Upper lobe of right lung (tissue), 1 donor: ENCODE measurements at regions of chr17 and their contacts with region 1.

Region 1: DNA sequence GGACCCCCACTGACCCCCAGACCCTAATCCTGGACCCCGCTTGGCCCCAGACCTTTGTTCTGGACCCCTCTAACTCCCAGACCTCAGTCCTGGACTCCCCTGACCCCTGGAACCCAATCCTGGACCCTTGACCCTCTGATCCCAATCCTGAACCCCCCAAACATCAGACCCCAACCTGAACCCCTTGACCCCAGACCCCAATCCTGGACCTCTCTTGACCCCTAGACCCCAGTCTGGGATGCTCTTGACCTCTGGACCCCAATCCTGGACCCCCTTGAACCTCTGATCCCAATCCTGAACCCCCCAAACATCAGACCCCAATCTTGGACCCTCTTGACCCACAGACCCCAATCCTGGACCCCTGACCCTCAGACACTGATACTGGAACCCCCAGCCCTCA is 13.5 kb upstream of the P2RX1 start:
- DNase-seq: no peak
- ATAC-seq: no peak
- H3K4me3 ChIP-seq: no peak overlapping the region
- H3K27ac ChIP-seq: no peak overlapping the region
- H3K4me1 ChIP-seq: no peaks in the 10 kb centered on the region
- H3K27me3 ChIP-seq: no peaks in the 10 kb centered on the region
- CTCF ChIP-seq: no peak

Region 2: DNA sequence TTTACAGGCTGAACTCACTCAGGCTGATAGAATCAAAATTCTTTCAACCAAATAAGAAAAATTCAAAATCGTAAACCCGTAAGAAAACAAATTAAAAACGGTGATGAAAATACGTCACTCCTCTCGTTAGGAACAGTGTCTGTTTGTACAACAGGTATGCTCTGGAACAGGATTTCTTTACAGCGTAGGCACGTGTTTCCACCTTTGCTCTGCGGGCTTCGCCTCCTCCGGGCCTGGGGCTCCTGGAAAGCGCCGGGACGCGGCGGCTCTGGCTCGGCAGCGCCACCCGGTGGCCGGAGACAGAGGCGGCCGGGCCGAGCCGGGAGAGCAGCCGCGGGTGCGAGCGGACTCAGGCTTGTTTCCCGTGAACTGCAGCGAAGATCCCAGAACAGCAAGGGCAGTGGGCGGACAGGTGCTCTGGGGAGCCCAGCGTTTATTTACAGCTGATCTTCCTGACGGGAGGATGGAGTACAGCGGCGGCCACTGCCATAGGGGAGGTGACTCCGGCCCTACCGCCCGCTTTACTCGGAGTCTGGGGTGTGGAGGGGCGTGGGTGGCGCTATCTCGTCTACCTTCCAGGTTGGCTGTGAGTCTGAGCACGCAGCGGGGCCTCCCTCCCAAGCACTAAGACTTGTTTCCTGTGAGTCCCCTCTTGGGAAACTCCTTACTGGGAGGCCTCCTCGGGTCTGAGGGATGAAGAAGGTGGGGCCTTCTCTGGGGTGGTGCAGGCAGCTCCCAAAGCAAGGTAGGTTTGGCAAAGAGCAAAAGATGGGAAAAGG is 74.9 kb after region 1 on chr17:
- intact Hi-C with region 1: loop called (anchors 5 kb)
- DNase-seq: peak; percentile 80
- ATAC-seq: peak; percentile 69
- H3K4me3 ChIP-seq: no peak overlapping the region
- H3K27ac ChIP-seq: no peak overlapping the region
- H3K4me1 ChIP-seq: peaks cover 15% of the 10 kb centered on the region
- H3K27me3 ChIP-seq: no peaks in the 10 kb centered on the region
- CTCF ChIP-seq: peak; percentile 92